B cell (primary cell): ENCODE measurements at regions of chr4 and their contacts with region 1.

Region 1: GRCh38 chr4:101813604-101814003 is 23.1 kb downstream of the BANK1 start:
- DNase-seq: peak; percentile 84
- ATAC-seq: peak; percentile 99
- H3K4me3 ChIP-seq: peak overlapping the region; percentile 39 to 88 (median 60)
- H3K4me3 Mint-ChIP-seq: peak overlapping the region; percentile 93
- H3K27ac ChIP-seq: peak overlapping the region; percentile 82 to 94
- H3K27ac Mint-ChIP-seq: peak overlapping the region; percentile 94
- H3K4me1 ChIP-seq: peaks cover 58 to 78% of the 10 kb centered on the region in 2 donors
- H3K4me1 Mint-ChIP-seq: peaks cover 75% of the 10 kb centered on the region
- H3K27me3 ChIP-seq: no peaks in the 10 kb centered on the region
- H3K27me3 Mint-ChIP-seq: no peaks in the 10 kb centered on the region
- CTCF ChIP-seq: no peak

Region 2: DNA sequence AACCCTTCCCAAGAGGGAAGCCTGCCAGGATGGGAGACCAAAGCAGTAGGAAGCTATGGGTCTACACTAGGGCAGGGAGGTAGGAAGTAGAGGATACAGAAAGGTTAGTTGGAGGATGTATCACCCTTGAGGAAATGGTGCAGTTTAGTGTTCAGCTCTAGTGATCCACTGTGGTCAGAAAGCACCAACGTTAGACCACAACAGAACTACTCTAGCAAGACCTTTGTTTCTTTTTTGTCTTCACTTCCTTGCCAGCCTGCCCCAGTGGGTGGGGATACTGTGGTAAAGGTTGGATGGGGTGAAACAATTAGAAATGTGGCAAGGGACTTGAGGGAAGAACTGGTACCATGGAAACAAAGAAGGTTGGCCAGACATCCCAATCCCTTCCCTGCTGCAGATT is 1706.6 kb before region 1 on chr4:
- CTCF ChIA-PET with region 1: no interaction called
- POLR2A ChIA-PET with region 1: no interaction called
- intact Hi-C with region 1: loop called (anchors 10 kb)
- DNase-seq: peak; percentile 84
- ATAC-seq: peak; percentile 96
- H3K4me3 ChIP-seq: peak overlapping the region in 2 of 5 experiments; percentile 2 to 19
- H3K4me3 Mint-ChIP-seq: peak overlapping the region; percentile 51
- H3K27ac ChIP-seq: no peak overlapping the region
- H3K27ac Mint-ChIP-seq: peak overlapping the region; percentile 51
- H3K4me1 ChIP-seq: peaks cover 18 to 31% of the 10 kb centered on the region in 2 donors
- H3K4me1 Mint-ChIP-seq: peaks cover 40% of the 10 kb centered on the region
- H3K27me3 ChIP-seq: no peaks in the 10 kb centered on the region
- H3K27me3 Mint-ChIP-seq: no peaks in the 10 kb centered on the region
- CTCF ChIP-seq: no peak

Region 3: DNA sequence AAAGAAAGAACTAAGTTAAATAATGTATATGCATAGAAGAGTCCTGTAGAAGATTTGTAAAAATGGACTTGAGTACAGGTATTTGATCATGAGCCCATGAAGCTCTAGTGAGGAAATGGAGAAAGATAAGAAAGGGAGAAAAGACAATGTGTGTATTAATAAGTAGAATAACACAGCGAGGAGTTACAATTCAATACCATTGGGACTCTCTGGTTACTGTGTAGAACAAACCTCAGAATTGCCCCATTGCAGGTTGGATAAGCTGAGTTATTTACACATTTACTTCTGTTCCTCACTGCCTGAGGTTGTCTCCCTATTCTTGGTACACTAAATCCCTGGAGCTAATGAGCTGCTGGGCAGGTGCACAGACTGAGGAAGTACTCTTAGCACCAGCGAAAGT is 10.3 kb after region 1 on chr4:
- CTCF ChIA-PET with region 1: interaction called, 11 read pairs
- POLR2A ChIA-PET with region 1: interaction called, 5 read pairs
- intact Hi-C with region 1: loop called (anchors 1 kb)
- DNase-seq: no peak
- ATAC-seq: peak; percentile 52
- H3K4me3 ChIP-seq: peak overlapping the region in 2 of 5 experiments; percentile 3 to 41
- H3K4me3 Mint-ChIP-seq: peak overlapping the region; percentile 53
- H3K27ac ChIP-seq: peak overlapping the region in 1 of 2 donors; percentile 71
- H3K27ac Mint-ChIP-seq: peak overlapping the region; percentile 87
- H3K4me1 ChIP-seq: peaks cover 45 to 67% of the 10 kb centered on the region in 2 donors
- H3K4me1 Mint-ChIP-seq: peaks cover 71% of the 10 kb centered on the region
- H3K27me3 ChIP-seq: no peaks in the 10 kb centered on the region
- H3K27me3 Mint-ChIP-seq: no peaks in the 10 kb centered on the region
- CTCF ChIP-seq: no peak

Region 4: DNA sequence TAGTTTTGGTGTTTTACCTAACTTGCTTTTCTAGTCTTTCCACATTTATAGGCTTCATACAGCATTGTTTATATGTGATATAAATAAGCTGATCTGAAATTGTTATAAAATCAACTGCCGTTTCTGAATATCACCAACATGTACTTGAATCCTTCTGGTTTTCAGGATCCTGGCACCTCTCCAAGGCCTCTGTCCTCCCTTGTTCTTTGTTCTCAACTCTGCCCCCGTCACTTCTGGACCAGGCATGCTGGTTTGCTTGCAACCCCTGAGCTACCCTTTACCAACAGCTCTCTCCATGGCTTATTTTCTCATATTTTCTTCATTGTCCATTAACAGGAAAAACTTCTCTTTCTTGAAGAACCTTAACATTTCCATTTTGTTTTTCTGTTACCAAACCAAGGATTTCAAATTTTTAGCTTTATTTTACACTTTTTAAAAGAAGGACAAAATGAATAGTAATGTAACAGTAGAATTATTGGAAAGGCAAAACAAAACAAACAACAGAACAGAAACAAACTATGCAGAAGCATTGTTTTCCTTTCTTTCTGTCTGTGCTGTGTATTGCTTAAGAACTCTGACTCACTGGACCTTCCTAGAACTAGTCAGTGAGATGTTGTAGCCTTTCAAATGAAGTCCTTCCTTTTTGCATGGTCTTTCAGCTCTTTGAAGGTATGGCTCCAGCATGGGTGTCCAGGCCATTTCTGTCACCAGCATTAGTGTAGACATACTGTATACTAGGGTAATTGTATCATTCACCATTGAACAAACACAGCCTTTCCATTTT is 21.7 kb after region 1 on chr4:
- CTCF ChIA-PET with region 1: interaction called, 11 read pairs
- POLR2A ChIA-PET with region 1: interaction called, 4 read pairs
- intact Hi-C with region 1: loop called (anchors 2 kb)
- DNase-seq: no peak
- ATAC-seq: no peak
- H3K4me3 ChIP-seq: no peak overlapping the region
- H3K4me3 Mint-ChIP-seq: peak overlapping the region; percentile 20
- H3K27ac ChIP-seq: peak overlapping the region in 1 of 2 donors; percentile 62
- H3K27ac Mint-ChIP-seq: peak overlapping the region; percentile 86
- H3K4me1 ChIP-seq: peaks cover 35 to 69% of the 10 kb centered on the region in 2 donors
- H3K4me1 Mint-ChIP-seq: peaks cover 79% of the 10 kb centered on the region
- H3K27me3 ChIP-seq: no peaks in the 10 kb centered on the region
- H3K27me3 Mint-ChIP-seq: no peaks in the 10 kb centered on the region
- CTCF ChIP-seq: no peak

Region 5: GRCh38 chr4:101853028-101853427 is 39.4 kb after region 1 on chr4:
- CTCF ChIA-PET with region 1: interaction called, 5 read pairs
- POLR2A ChIA-PET with region 1: interaction called, 3 read pairs
- intact Hi-C with region 1: loop called (anchors 5 kb)
- DNase-seq: peak; percentile 50
- ATAC-seq: peak; percentile 58
- H3K4me3 ChIP-seq: peak overlapping the region in 2 of 5 experiments; percentile 3 to 33
- H3K4me3 Mint-ChIP-seq: peak overlapping the region; percentile 73
- H3K27ac ChIP-seq: peak overlapping the region; percentile 58 to 84
- H3K27ac Mint-ChIP-seq: peak overlapping the region; percentile 92
- H3K4me1 ChIP-seq: peaks cover 68 to 91% of the 10 kb centered on the region in 2 donors
- H3K4me1 Mint-ChIP-seq: peaks cover 77% of the 10 kb centered on the region
- H3K27me3 ChIP-seq: no peaks in the 10 kb centered on the region
- H3K27me3 Mint-ChIP-seq: no peaks in the 10 kb centered on the region
- CTCF ChIP-seq: no peak

Region 6: DNA sequence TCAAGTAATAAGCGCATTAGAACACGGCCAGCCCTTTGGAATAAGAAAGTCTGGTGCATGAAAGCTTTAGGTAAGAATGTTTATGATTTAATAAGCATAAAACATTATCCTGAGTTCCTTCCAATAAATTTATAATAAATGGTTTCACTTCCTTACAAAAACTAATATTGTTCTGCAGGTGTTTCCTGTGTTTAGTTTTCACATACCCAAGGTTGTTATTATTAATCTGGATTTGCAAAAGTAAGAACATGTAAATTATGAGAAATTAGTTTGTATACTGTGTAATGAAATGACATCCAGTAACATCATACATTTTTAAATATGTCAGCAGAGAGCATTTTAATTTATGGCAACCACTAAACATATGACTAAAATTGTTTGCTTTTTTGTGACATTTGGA is 49.0 kb after region 1 on chr4:
- CTCF ChIA-PET with region 1: interaction called, 5 read pairs
- POLR2A ChIA-PET with region 1: no interaction called
- intact Hi-C with region 1: loop called (anchors 2 kb)
- DNase-seq: peak; percentile 68
- ATAC-seq: peak; percentile 67
- H3K4me3 ChIP-seq: peak overlapping the region in 2 of 5 experiments; percentile 27 to 45
- H3K4me3 Mint-ChIP-seq: peak overlapping the region; percentile 39
- H3K27ac ChIP-seq: peak overlapping the region; percentile 74
- H3K27ac Mint-ChIP-seq: peak overlapping the region; percentile 75
- H3K4me1 ChIP-seq: peaks cover 53 to 77% of the 10 kb centered on the region in 2 donors
- H3K4me1 Mint-ChIP-seq: peaks cover 65% of the 10 kb centered on the region
- H3K27me3 ChIP-seq: no peaks in the 10 kb centered on the region
- H3K27me3 Mint-ChIP-seq: no peaks in the 10 kb centered on the region
- CTCF ChIP-seq: no peak